Body of pancreas (tissue), 4 donors: ENCODE measurements at regions of chr5 and their contacts with region 1.

Region 1: GRCh38 chr5:6636293-6636692 is 3.1 kb downstream of the SRD5A1 start:
- DNase-seq: peak in 2 of 4 donors; percentile 13 to 21
- ATAC-seq: no peak
- H3K4me3 ChIP-seq: no peak overlapping the region
- H3K27ac ChIP-seq: no peak overlapping the region
- H3K4me1 ChIP-seq: peaks cover 15% of the 10 kb centered on the region
- H3K27me3 ChIP-seq: no peaks in the 10 kb centered on the region
- CTCF ChIP-seq: no peak
- POLR2A ChIP-seq: no peak

Region 2: GRCh38 chr5:6704361-6704851 is 68.1 kb after region 1 on chr5:
- intact Hi-C with region 1: loop called (anchors 5 kb)
- DNase-seq: peak; percentile 40 to 58 (median 55)
- ATAC-seq: peak; percentile 85
- H3K4me3 ChIP-seq: no peak overlapping the region
- H3K27ac ChIP-seq: peak overlapping the region; percentile 56 to 79 (median 66)
- H3K4me1 ChIP-seq: peaks cover 12% of the 10 kb centered on the region
- H3K27me3 ChIP-seq: no peaks in the 10 kb centered on the region
- CTCF ChIP-seq: no peak
- POLR2A ChIP-seq: no peak

Region 3: DNA sequence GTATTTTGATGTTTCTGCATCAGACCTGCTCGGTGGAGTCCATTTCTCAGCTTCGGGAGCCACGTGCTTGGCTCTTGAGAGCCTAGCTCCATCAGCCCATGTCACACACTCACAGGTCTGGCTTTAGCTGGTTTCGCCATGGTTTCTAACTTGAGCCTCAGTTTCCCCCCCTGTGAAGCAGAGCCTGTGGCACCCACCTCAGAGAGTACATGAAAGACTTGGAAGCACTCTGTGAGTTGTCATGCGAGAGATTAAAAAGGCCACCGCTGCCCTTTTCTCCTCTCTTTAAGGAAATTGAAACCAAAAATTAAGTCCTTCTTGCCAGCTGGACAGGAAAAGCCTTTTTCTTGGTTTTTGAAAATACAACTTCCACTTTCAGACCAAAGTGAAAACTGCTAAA is 85.7 kb after region 1 on chr5:
- intact Hi-C with region 1: no loop called
- DNase-seq: no peak
- ATAC-seq: no peak
- H3K4me3 ChIP-seq: no peak overlapping the region
- H3K27ac ChIP-seq: peak overlapping the region in 1 of 4 donors; percentile 54
- H3K4me1 ChIP-seq: peaks cover 56% of the 10 kb centered on the region
- H3K27me3 ChIP-seq: no peaks in the 10 kb centered on the region
- CTCF ChIP-seq: no peak
- POLR2A ChIP-seq: no peak